ENCODE measurements at regions of chr15 and their contacts with region 1.

Region 1: DNA sequence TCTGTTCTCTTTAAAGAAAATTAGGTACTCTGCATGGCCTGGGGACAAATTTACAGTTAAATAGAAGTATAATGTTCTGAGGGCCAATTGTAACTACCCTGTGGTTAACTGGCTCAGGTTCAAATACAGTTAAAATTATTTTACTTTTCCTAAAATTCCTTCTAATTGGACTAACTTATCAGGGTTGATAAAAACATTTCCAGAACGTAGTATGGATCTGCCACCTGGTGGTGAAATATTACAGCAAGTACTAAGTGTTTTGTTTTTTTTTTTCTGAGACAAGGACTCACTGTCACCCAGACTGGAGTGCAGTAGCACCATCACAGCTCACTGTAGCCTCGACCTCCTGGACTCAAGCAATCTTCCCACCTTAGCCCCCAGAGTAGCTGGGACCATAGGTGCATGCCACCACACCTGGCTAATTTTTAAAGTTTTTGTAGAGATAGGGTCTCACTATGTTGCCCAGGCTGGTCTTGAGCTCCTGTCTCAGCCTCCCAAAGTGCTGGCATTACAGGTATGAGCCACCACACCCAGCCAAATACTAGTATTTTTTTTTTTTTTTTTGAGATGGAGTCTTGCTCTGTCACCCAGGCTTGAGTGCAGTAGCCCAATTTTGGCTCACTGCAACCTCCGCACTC is 29.2 kb downstream of the NEO1 start:
- DNase-seq: peak; percentile 63
- H3K4me3 Mint-ChIP-seq: no peak overlapping the region
- H3K27ac Mint-ChIP-seq: no peak overlapping the region
- H3K4me1 Mint-ChIP-seq: peaks cover 5% of the 10 kb centered on the region
- H3K27me3 Mint-ChIP-seq: no peaks in the 10 kb centered on the region
- CTCF ChIP-seq: peak; percentile 77

Region 2: GRCh38 chr15:72599855-72600464 is 481.5 kb before region 1 on chr15:
- CTCF ChIA-PET with region 1: interaction called, 3 read pairs
- POLR2A ChIA-PET with region 1: no interaction called
- intact Hi-C with region 1: loop called (anchors 1 kb)
- DNase-seq: peak; percentile 64
- H3K4me3 Mint-ChIP-seq: no peak overlapping the region
- H3K27ac Mint-ChIP-seq: no peak overlapping the region
- H3K4me1 Mint-ChIP-seq: peaks cover 6% of the 10 kb centered on the region
- H3K27me3 Mint-ChIP-seq: no peaks in the 10 kb centered on the region
- CTCF ChIP-seq: peak; percentile 61

Region 3: DNA sequence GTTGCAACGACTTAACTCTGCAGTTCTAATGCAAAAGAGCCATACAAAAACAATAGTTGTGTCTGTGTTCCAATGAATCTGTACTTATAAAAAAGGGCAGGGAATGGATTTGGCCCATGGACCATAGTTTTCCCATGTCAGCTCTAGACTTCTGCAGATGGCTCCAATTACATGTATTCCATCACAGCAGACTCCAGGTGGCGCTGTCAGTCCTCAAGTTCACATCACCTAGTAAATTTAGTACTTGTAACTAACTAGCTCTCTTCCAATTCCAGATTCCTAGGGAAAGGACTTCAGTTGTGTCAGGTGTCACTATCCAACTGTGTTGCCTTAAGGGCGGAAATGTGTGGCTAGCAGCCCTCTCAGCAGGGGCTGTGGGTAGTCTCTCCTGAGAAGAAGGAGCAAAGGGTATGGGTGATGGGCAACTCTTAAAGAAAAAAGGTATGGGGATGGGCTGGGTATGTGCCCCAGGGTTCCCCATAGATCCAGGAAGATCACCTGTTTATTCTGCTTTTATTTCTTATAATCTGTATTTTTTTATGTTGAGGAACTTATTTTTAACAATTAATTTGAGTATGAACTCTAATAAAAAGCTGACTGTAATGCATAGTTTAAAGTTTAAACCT is 359.3 kb before region 1 on chr15:
- CTCF ChIA-PET with region 1: interaction called, 10 read pairs
- POLR2A ChIA-PET with region 1: interaction called, 3 read pairs
- intact Hi-C with region 1: loop called (anchors 1 kb)
- DNase-seq: peak; percentile 64
- H3K4me3 Mint-ChIP-seq: no peak overlapping the region
- H3K27ac Mint-ChIP-seq: no peak overlapping the region
- H3K4me1 Mint-ChIP-seq: no peaks in the 10 kb centered on the region
- H3K27me3 Mint-ChIP-seq: no peaks in the 10 kb centered on the region
- CTCF ChIP-seq: peak; percentile 84

Region 4: DNA sequence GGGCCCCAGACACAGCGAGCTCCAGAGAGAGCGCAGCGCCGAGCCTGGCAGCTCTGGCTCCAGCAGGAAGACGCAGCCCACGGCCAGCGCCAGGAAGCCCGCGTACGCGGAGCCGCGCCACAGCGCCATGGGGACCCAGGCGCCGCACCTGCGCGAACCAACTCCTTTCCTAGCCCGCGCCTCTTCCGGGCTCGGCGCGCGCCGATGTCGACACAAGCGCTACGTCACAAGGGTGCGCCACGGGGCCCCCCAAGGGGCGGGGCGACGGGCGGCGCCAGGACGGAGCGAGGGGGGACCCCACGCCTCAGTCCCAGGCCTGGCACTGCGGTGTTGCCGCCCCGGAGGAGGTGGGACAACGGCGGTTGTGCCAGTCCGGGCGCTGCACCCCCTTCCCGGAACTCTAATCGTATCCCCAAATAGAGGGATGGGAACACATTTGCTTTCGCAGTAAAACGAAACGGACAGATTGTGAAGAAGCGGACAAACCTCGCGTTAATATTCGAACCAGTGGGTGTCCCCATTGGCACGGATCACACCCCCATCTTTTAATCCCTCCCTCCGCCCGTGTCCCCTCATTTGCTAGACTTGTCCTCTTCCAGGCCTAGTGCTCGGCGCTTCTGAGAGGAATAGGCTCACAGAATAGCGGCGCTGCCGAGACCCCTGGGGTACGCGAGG is 297.7 kb before region 1 on chr15 and contains the start of gene ADPGK:
- CTCF ChIA-PET with region 1: interaction called, 17 read pairs
- POLR2A ChIA-PET with region 1: interaction called, 6 read pairs
- intact Hi-C with region 1: loop called (anchors 1 kb)
- DNase-seq: peak; percentile 93
- H3K4me3 Mint-ChIP-seq: peak within 1 kb of the TSS; percentile 81
- H3K27ac Mint-ChIP-seq: peak within 1 kb of the TSS; percentile 61
- H3K4me1 Mint-ChIP-seq: peaks cover 22% of the 10 kb centered on the region
- H3K27me3 Mint-ChIP-seq: no peaks in the 10 kb centered on the region
- CTCF ChIP-seq: no peak
- total RNA-seq, gene ADPGK: 41.6 and 53.7 TPM in 2 replicates

Region 5: GRCh38 chr15:72796515-72797337 is 284.7 kb before region 1 on chr15:
- CTCF ChIA-PET with region 1: interaction called, 17 read pairs
- POLR2A ChIA-PET with region 1: interaction called, 3 read pairs
- intact Hi-C with region 1: loop called (anchors 1 kb)
- DNase-seq: peak; percentile 33
- H3K4me3 Mint-ChIP-seq: peak overlapping the region; percentile 65
- H3K27ac Mint-ChIP-seq: no peak overlapping the region
- H3K4me1 Mint-ChIP-seq: no peaks in the 10 kb centered on the region
- H3K27me3 Mint-ChIP-seq: peaks cover 6% of the 10 kb centered on the region
- CTCF ChIP-seq: peak; percentile 56

Region 6: GRCh38 chr15:73051811-73052678 is 29.4 kb before region 1 on chr15 and contains the start of gene NEO1:
- CTCF ChIA-PET with region 1: interaction called, 11 read pairs
- POLR2A ChIA-PET with region 1: interaction called, 7 read pairs
- intact Hi-C with region 1: loop called (anchors 2 kb)
- DNase-seq: peak; percentile 70
- H3K4me3 Mint-ChIP-seq: peak within 1 kb of the TSS; percentile 85
- H3K27ac Mint-ChIP-seq: peak within 1 kb of the TSS; percentile 73
- H3K4me1 Mint-ChIP-seq: peaks cover 7% of the 10 kb centered on the region
- H3K27me3 Mint-ChIP-seq: peaks cover 23% of the 10 kb centered on the region
- CTCF ChIP-seq: no peak
- total RNA-seq, gene NEO1: 13.2 and 15.1 TPM in 2 replicates

Region 7: DNA sequence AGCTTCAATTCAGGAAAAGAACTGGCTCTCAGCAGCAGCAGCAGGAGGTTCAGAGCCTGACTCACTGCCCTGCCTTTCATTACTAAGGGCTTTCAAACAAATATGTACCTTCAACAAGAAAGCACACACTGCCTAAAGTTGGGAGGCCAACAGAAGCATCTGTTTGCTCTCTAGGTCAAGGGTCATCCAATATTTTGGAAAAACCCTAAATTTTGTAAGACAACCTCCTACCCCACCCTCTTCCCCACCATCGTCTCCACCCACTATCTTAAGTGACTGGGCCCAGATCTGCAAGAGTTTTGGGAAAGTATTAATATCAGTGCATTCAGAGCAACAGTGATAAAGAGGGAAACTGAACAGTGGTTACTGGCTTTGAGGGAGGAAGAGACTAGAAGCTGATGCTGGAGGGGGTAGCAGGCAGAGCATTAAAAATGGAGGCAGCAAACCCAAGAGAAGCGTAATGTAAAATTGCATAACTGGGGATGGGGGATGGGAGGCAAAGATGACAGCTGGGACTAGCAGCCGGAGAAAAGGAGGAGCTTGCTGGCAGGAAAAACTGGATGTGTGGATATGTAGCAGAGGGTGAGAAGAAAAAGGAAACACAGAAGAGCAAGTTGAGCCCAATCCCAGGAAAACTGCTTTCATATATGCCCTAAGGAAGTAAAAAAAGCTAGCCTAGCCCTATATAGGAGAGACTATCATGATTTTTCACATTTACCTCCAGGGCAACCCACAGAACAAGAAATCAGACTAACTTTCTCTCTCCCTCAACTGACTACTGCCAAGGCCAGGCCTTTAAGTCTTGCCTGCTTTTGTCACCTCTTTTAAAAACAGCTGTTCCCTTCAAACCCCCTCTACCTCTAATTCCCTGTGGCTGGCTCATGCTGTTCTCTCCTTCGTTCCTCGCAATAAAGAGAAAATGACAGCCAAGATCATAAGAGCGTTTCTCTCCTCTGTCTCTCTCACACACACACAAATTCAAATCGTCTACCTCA is 520.3 kb after region 1 on chr15:
- CTCF ChIA-PET with region 1: no interaction called
- POLR2A ChIA-PET with region 1: no interaction called
- intact Hi-C with region 1: no loop called
- DNase-seq: peak; percentile 60
- H3K4me3 Mint-ChIP-seq: no peak overlapping the region
- H3K27ac Mint-ChIP-seq: no peak overlapping the region
- H3K4me1 Mint-ChIP-seq: no peaks in the 10 kb centered on the region
- H3K27me3 Mint-ChIP-seq: no peaks in the 10 kb centered on the region
- CTCF ChIP-seq: no peak

Measured in MCF 10A (cell line).